ENCODE measurements at regions of chr6 and their contacts with region 1.

Region 1: DNA sequence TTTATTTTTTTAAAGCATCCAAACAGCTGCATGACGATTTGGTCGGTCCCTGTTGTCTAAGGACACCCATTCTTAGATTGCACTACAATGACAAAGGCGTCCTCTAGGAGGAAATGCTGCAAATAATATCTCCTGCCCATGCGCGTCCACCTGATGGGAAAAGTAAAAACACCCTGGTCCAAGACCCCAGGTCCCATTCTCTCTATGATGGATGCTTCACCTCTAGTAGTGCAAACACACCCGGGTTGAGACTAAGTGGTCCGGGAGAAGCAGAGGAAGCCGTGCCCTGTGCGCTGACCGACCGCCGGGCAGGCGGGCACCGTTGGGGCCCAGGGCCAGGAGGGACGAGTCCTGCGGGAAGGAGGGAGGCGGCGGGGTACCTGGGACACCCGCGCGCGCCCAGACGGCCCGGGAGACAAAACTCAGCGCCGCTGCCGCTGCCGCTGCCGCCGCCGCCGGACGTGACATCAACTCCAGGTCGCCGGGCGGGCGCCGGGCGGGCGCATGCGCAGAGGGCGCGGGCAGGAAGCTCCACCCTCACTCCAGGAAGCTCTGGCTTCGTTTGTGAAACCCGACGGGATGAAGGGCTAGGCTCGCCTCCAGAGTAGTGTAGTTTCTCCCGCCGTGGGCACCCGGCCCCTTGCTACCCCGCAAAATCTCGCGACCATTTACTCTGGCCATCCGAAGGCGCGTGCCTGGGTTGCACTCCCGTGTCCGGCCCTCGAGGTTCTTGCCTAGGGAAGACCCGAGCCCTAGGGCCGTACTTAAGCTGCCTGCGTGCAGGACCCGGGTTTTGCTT is at the start of gene TBC1D7:
- DNase-seq: peak; percentile 94
- ATAC-seq: peak; percentile 97
- H3K4me3 Mint-ChIP-seq: peak within 1 kb of the TSS; percentile 93
- H3K27ac Mint-ChIP-seq: peak within 1 kb of the TSS; percentile 95
- H3K4me1 Mint-ChIP-seq: peaks cover 30% of the 10 kb centered on the region
- H3K27me3 Mint-ChIP-seq: peaks cover 2% of the 10 kb centered on the region
- total RNA-seq, gene TBC1D7: 25.2 to 30.3 TPM

Region 2: GRCh38 chr6:12911387-12911960 is 416.8 kb before region 1 on chr6:
- CTCF ChIA-PET with region 1: interaction called, 37 read pairs
- POLR2A ChIA-PET with region 1: interaction called, 3 read pairs
- DNase-seq: no peak
- ATAC-seq: no peak
- H3K4me3 Mint-ChIP-seq: no peak overlapping the region
- H3K27ac Mint-ChIP-seq: no peak overlapping the region
- H3K4me1 Mint-ChIP-seq: no peaks in the 10 kb centered on the region
- H3K27me3 Mint-ChIP-seq: peaks cover 19% of the 10 kb centered on the region

Region 3: GRCh38 chr6:13194852-13195251 is 133.4 kb before region 1 on chr6:
- CTCF ChIA-PET with region 1: interaction called, 12 read pairs
- POLR2A ChIA-PET with region 1: interaction called, 3 read pairs
- DNase-seq: peak; percentile 33
- ATAC-seq: no peak
- H3K4me3 Mint-ChIP-seq: no peak overlapping the region
- H3K27ac Mint-ChIP-seq: no peak overlapping the region
- H3K4me1 Mint-ChIP-seq: no peaks in the 10 kb centered on the region
- H3K27me3 Mint-ChIP-seq: peaks cover 15% of the 10 kb centered on the region

Region 4: GRCh38 chr6:13302751-13303667 is 25.3 kb before region 1 on chr6:
- CTCF ChIA-PET with region 1: interaction called, 5 read pairs
- POLR2A ChIA-PET with region 1: interaction called, 12 read pairs
- DNase-seq: peak; percentile 64
- ATAC-seq: peak; percentile 91
- H3K4me3 Mint-ChIP-seq: no peak overlapping the region
- H3K27ac Mint-ChIP-seq: peak overlapping the region; percentile 68
- H3K4me1 Mint-ChIP-seq: peaks cover 23% of the 10 kb centered on the region
- H3K27me3 Mint-ChIP-seq: no peaks in the 10 kb centered on the region

Region 5: GRCh38 chr6:13311155-13311554 is 17.1 kb before region 1 on chr6:
- CTCF ChIA-PET with region 1: interaction called, 8 read pairs
- POLR2A ChIA-PET with region 1: interaction called, 11 read pairs
- DNase-seq: no peak
- ATAC-seq: no peak
- H3K4me3 Mint-ChIP-seq: no peak overlapping the region
- H3K27ac Mint-ChIP-seq: no peak overlapping the region
- H3K4me1 Mint-ChIP-seq: no peaks in the 10 kb centered on the region
- H3K27me3 Mint-ChIP-seq: no peaks in the 10 kb centered on the region

Region 6: GRCh38 chr6:13355043-13355951 is 27.0 kb after region 1 on chr6:
- CTCF ChIA-PET with region 1: interaction called, 10 read pairs
- POLR2A ChIA-PET with region 1: interaction called, 10 read pairs
- DNase-seq: peak; percentile 57
- ATAC-seq: peak; percentile 65
- H3K4me3 Mint-ChIP-seq: peak overlapping the region; percentile 68
- H3K27ac Mint-ChIP-seq: peak overlapping the region; percentile 97
- H3K4me1 Mint-ChIP-seq: peaks cover 55% of the 10 kb centered on the region
- H3K27me3 Mint-ChIP-seq: no peaks in the 10 kb centered on the region

Region 7: GRCh38 chr6:13604546-13605416 is 276.5 kb after region 1 on chr6:
- CTCF ChIA-PET with region 1: no interaction called
- POLR2A ChIA-PET with region 1: no interaction called
- DNase-seq: no peak
- ATAC-seq: no peak
- H3K4me3 Mint-ChIP-seq: no peak overlapping the region
- H3K27ac Mint-ChIP-seq: no peak overlapping the region
- H3K4me1 Mint-ChIP-seq: peaks cover 4% of the 10 kb centered on the region
- H3K27me3 Mint-ChIP-seq: no peaks in the 10 kb centered on the region

Region 8: DNA sequence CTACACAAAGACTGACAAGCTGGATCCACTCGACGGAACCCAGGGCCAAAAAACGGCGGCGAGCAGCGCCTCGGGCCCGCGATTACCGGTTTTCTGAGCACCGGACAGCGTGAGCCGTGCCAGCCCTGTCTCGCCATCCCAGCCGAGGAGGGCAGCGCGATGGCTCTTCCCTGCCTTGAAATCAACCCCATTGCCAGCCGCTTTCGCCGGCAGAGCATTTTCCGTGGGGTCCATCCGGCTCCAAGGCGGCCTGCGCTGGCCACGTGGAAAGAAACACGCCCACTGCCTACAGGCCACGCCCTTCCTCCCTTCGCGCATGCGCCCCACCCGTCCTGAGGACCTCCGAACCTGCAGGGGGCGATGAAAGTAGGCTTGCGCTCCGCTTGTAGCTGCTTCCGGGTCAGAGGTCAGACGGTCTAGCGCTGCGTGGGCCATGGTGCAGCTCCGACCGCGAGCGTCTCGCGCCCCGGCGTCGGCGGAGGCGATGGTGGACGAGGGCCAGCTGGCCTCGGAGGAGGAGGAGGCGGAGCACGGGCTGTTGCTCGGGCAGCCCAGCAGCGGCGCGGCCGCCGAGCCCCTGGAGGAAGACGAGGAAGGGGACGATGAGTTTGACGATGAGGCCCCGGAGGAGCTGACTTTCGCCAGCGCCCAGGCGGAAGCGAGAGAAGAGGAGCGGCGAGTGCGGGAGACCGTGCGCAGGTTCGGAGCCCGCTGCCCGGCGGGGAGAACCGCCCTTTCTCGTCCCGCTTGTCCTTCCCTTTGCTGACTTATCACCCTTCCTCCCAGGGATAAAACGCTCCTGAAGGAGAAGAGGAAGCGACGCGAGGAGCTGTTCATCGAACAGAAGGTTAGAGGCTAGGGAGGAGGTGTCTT is 286.9 kb after region 1 on chr6 and contains the start of gene NOL7:
- CTCF ChIA-PET with region 1: interaction called, 20 read pairs
- POLR2A ChIA-PET with region 1: interaction called, 15 read pairs
- DNase-seq: peak; percentile 99
- ATAC-seq: peak; percentile 93
- H3K4me3 Mint-ChIP-seq: peak within 1 kb of the TSS; percentile 99
- H3K27ac Mint-ChIP-seq: peak within 1 kb of the TSS; percentile 96
- H3K4me1 Mint-ChIP-seq: peaks cover 45% of the 10 kb centered on the region
- H3K27me3 Mint-ChIP-seq: no peaks in the 10 kb centered on the region
- total RNA-seq, gene NOL7: 67.3 to 71.6 TPM